MCF 10A (cell line): ENCODE measurements at regions of chr2 and their contacts with region 1.

Region 1: DNA sequence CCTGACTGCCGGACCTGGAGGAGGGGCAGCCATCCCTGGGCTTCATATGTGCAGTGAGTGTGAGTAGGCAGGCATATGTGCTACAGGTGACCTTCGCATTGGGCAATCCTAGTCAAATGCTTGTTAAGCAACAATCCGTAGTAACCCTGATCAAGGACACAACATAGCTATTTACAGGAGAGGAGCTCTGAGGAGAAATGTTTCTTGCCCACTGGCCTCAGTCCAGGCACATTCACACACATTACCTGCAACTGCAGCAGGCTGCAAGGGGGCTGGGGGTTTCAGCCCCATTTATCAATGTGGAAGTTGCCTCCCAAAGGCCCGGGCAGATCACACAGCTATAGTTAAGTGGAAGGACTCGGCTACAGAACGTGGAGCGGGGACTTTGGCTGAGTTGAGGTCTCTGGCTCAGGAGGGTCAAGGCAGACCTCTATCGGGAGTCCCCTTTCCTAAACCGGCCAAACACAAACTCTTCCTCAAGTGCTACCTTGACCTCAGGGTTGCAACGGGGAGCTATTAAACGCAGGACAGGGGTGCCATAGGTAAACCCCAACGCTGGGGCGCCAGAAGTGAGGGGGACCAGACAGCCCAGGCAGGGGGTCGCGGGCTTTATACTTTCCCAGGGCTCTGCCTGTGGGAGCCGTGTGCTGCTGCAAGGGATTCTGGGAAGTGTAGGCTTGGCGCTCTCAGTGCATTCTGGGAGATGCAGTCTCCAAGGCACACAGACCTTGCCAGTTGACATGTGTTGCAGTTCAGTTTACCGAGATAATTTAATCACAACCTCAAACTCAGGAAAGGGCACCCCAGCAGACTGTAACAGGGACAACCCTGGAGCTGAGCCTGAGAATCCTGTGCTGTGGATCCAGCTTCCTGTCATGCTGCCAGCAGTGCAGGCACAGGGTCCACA is 9.4 kb downstream of the KHK start:
- DNase-seq: peak; percentile 46
- H3K4me3 Mint-ChIP-seq: no peak overlapping the region
- H3K27ac Mint-ChIP-seq: no peak overlapping the region
- H3K4me1 Mint-ChIP-seq: no peaks in the 10 kb centered on the region
- H3K27me3 Mint-ChIP-seq: no peaks in the 10 kb centered on the region
- CTCF ChIP-seq: no peak

Region 2: DNA sequence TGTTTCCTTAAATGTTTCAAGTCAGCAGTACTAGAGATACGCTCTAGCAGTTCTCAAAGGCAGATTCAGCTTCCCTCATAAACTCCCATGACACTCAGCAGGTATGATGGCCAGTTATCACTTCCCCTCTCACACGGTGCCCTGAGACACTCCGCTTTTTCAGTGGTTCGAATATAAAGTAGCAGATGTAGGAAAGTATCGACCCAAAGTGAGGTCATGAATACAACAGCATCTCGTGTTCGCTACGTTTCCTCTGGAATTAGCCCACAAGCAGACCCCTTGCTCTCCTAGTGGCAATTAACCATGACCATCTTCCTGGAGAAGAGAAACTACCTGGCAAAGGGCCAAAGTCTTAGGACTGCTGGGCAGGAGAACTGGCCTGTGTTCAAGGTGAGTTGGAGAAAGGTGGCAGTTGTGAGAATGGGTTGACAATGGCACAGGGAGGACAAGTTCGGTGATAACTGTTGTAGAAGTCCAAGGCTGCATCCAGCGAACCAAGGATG is 53.8 kb before region 1 on chr2:
- CTCF ChIA-PET with region 1: no interaction called
- POLR2A ChIA-PET with region 1: no interaction called
- intact Hi-C with region 1: no loop called
- DNase-seq: peak; percentile 9
- H3K4me3 Mint-ChIP-seq: no peak overlapping the region
- H3K27ac Mint-ChIP-seq: no peak overlapping the region
- H3K4me1 Mint-ChIP-seq: no peaks in the 10 kb centered on the region
- H3K27me3 Mint-ChIP-seq: no peaks in the 10 kb centered on the region
- CTCF ChIP-seq: no peak

Region 3: DNA sequence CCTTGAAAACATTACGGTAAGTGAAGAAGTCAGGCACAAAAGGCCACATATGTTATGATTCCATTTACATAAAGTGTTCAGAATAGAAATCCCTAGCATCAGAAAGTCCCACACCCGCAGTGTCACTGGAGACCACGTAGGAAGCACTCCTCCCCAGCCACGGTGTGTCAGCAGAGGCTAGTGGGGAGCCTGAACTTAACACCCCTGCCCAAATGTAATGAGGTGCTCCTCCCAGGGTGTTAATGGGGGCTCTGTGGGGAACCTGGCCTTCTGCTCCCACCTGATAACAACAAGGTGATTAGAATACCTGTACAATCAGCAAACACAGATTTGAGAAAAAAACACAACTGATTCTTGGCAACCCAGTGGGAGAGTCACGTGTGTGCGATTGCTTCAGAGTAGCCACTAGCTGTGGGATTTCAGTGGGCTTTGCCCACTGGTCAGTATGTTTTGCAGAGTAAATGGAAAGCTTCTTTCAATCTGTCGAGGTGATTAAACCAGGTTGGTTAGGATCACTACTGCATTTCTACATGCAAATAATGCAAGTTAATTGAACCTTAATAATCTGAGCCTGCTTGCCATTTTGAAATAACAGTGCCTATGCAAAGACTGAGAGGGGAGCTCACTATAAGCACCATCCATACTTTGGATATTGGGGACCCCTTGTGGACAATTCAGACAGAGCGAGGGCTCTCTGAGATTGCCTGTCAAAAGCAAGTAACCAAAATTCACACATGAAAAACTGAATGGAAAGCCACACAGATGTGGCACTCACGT is 95.2 kb after region 1 on chr2:
- CTCF ChIA-PET with region 1: interaction called, 18 read pairs
- POLR2A ChIA-PET with region 1: interaction called, 9 read pairs
- intact Hi-C with region 1: loop called (anchors 1 kb)
- DNase-seq: peak; percentile 81
- H3K4me3 Mint-ChIP-seq: no peak overlapping the region
- H3K27ac Mint-ChIP-seq: no peak overlapping the region
- H3K4me1 Mint-ChIP-seq: no peaks in the 10 kb centered on the region
- H3K27me3 Mint-ChIP-seq: peaks cover 11% of the 10 kb centered on the region
- CTCF ChIP-seq: peak; percentile 39

Region 4: GRCh38 chr2:27316655-27317411 is 220.8 kb after region 1 on chr2:
- CTCF ChIA-PET with region 1: no interaction called
- POLR2A ChIA-PET with region 1: no interaction called
- intact Hi-C with region 1: no loop called
- DNase-seq: peak; percentile 74
- H3K4me3 Mint-ChIP-seq: no peak overlapping the region
- H3K27ac Mint-ChIP-seq: no peak overlapping the region
- H3K4me1 Mint-ChIP-seq: peaks cover 12% of the 10 kb centered on the region
- H3K27me3 Mint-ChIP-seq: no peaks in the 10 kb centered on the region
- CTCF ChIP-seq: no peak